Activated T-helper 1 cell treated with anti-CD3 and anti-CD28 coated beads, Interleukin-12 subunit alpha, Interleukin-12 subunit beta, Interleukin-2, Interleukin-4 antibody, amounts not matched to agents 30 ng/mL and 10 ng/mL and 1 ng/mL, durations not matched to agents 14 hours and 24 hours and 36 hours (primary cell): ENCODE measurements at regions of chr4 and their contacts with region 1.

Region 1: DNA sequence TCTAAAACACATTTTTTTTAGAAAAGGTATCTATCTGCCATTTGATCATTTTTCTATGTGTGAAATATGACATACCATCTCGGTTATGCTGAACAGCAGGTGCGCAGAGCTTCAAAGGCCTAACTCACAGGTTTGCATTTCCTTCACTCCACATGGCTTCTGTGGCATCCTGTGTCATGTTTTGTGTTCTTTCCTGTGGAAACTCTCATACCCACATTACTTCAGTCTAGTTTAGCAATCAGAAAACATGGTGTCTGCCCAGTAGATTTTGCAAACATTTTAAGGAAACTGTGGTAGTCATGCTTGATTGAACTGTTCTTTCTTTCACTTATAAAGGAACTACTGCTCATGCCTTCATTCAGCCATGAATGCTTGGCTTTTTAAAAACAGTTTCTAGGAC is 11.3 kb upstream of the ARAP2 start:
- DNase-seq: peak; percentile 72
- H3K4me3 Mint-ChIP-seq: peak overlapping the region; percentile 81
- H3K27ac Mint-ChIP-seq: peak overlapping the region; percentile 97
- H3K4me1 Mint-ChIP-seq: peaks cover 47% of the 10 kb centered on the region
- H3K27me3 Mint-ChIP-seq: no peaks in the 10 kb centered on the region

Region 2: DNA sequence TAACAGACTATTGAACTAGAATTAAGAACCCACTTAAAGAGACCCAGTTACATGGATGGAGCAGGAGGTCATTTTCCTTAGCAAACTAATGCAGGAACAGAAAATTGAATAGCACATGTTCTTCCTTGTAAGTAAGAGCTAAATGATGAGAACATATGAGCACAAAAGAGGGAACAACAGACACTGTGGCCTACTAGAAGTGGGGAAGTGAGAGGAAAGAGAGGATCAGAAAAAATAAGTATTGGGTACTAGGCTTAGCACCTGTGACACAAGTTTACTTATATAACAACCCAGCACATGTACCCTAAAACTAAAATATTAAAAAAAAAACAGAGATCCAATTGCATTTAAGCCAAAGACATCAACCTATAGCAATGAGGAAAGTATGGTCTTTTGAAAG is 37.5 kb before region 1 on chr4:
- intact Hi-C with region 1: no loop called
- DNase-seq: no peak
- H3K4me3 Mint-ChIP-seq: no peak overlapping the region
- H3K27ac Mint-ChIP-seq: peak overlapping the region; percentile 47
- H3K4me1 Mint-ChIP-seq: peaks cover 51% of the 10 kb centered on the region
- H3K27me3 Mint-ChIP-seq: no peaks in the 10 kb centered on the region

Region 3: DNA sequence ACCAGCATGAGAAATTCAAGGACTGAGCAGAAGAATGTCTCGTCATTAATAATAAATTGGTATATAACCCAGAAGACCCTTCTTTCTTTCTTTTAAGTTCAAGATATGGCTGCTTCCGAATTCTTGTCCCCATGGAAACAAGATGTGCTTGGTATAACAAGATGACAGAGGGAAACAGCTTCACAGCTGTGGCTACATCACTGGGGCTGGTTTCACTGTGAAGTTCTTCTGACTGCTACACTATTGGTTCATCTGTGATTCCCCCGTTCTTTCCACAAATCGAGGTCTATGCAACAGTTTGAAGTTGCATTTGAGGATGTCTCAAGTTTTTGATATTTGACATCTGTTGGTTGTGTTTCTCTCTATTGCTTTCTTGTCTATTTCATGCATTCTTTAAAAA is 13.5 kb after region 1 on chr4:
- intact Hi-C with region 1: loop called (anchors 1 kb)
- DNase-seq: peak; percentile 59
- H3K4me3 Mint-ChIP-seq: no peak overlapping the region
- H3K27ac Mint-ChIP-seq: peak overlapping the region; percentile 75
- H3K4me1 Mint-ChIP-seq: peaks cover 56% of the 10 kb centered on the region
- H3K27me3 Mint-ChIP-seq: no peaks in the 10 kb centered on the region

Region 4: DNA sequence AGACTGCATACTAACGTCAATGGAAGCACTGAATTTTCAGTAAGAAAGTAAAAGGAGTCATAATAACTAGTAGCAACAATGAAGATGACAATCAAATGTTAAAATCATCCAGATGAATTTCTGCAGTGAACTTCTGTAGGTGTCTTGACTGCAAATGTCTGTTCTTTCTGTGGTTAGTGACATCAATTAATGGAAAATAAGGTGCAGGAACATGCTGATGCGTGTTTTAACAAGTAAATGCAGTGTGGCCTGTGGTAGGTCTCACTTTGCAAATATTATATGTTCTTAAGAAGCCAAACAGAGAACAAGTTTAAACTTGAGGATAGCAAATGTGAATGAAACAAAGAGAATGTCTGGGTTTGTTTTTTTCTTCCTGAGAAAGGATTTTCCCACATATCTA is 23.2 kb after region 1 on chr4:
- intact Hi-C with region 1: loop called (anchors 1 kb)
- DNase-seq: no peak
- H3K4me3 Mint-ChIP-seq: peak overlapping the region; percentile 72
- H3K27ac Mint-ChIP-seq: peak overlapping the region; percentile 82
- H3K4me1 Mint-ChIP-seq: peaks cover 75% of the 10 kb centered on the region
- H3K27me3 Mint-ChIP-seq: no peaks in the 10 kb centered on the region

Region 5: DNA sequence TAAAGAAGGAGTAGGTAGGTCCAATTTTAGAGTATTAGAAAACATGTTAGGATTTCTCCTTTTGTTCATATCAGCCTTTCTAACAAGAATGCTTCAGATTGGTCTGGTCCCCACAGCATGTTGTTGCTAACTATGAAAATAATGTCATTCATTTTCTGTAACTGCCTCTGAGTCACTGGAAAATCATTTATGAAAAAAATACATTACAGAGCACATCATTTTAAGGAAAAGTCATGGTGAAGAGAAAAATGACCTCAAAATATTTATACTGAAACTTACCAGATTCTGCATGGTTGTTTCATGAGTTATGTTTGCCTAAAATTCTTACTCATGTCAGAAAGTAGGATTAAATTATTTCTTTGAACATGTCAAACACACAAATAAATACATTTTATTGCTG is 61.0 kb after region 1 on chr4:
- intact Hi-C with region 1: loop called (anchors 1 kb)
- DNase-seq: no peak
- H3K4me3 Mint-ChIP-seq: no peak overlapping the region
- H3K27ac Mint-ChIP-seq: peak overlapping the region; percentile 74
- H3K4me1 Mint-ChIP-seq: peaks cover 79% of the 10 kb centered on the region
- H3K27me3 Mint-ChIP-seq: no peaks in the 10 kb centered on the region